ENCODE measurements at regions of chr15 and their contacts with region 1.

Region 1: GRCh38 chr15:85289677-85290365 is 90.6 kb upstream of the AKAP13 start:
- DNase-seq: no peak
- H3K4me3 ChIP-seq: no peak overlapping the region
- CTCF ChIP-seq: peak; percentile 41

Region 2: GRCh38 chr15:85276911-85277310 is 12.9 kb before region 1 on chr15:
- CTCF ChIA-PET with region 1: interaction called, 13 read pairs
- POLR2A ChIA-PET with region 1: no interaction called
- DNase-seq: no peak
- H3K4me3 ChIP-seq: no peak overlapping the region
- CTCF ChIP-seq: no peak

Region 3: GRCh38 chr15:85312486-85312885 is 22.7 kb after region 1 on chr15:
- CTCF ChIA-PET with region 1: interaction called, 42 read pairs
- POLR2A ChIA-PET with region 1: no interaction called
- DNase-seq: no peak
- H3K4me3 ChIP-seq: no peak overlapping the region
- CTCF ChIP-seq: no peak

Measured in AG04449 (cell line).